Heart right ventricle (tissue), 16 donors: ENCODE measurements at regions of chr15 and their contacts with region 1.

Region 1: DNA sequence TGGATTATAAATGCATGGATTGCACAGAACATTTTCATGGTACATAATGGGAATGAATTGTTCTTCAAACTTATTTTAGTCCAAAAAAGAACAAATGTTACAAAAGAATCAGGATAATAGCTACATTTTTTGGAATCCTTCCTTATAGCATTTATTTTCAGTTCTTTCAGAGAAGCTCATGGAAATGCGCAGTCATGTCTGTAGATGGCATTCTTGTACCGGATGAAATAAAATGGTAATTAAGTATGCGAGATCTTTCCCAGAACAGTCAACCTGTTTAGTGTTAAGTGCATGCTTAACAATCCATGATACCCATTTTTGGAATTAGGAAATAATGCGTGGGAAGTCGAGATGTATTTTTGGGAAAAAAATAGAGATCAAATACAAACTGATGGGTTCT is 38.2 kb upstream of the GOLGA8B start:
- DNase-seq: no peak
- ATAC-seq: peak in 1 of 8 donors; percentile 50
- H3K4me3 ChIP-seq: no peak overlapping the region
- H3K27ac ChIP-seq: no peak overlapping the region
- H3K4me1 ChIP-seq: peaks cover 0 to 17% (median 6%) of the 10 kb centered on the region in 9 donors
- H3K27me3 ChIP-seq: peaks cover 0 to 7% (median 0%) of the 10 kb centered on the region in 7 donors
- CTCF ChIP-seq: peak; percentile 11 to 63 (median 40)

Region 2: DNA sequence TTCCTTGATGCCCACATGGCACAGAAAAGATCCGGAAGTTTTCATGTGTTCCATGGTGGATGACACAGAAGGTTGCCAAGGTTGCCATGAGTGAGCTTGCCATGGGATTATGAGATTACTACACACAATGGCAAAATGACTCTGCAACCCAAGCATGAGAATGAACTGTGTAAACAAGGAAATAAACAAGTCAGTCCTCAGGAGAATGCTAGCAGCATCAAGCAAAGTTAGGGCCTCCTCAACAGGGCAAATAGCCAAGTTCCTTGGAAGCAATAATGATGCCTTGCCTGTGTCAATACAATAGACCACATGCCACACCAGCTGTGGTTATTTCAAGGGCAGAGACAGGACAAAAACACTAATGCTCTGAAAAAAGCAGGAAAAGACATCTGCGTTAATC is 306.1 kb after region 1 on chr15:
- intact Hi-C with region 1: loop called in 3 of 10 experiments (anchors 5 kb)
- DNase-seq: no peak
- ATAC-seq: no peak
- H3K4me3 ChIP-seq: no peak overlapping the region
- H3K27ac ChIP-seq: no peak overlapping the region
- H3K4me1 ChIP-seq: peaks cover 0 to 6% (median 0%) of the 10 kb centered on the region in 9 donors
- H3K27me3 ChIP-seq: no peaks in the 10 kb centered on the region
- CTCF ChIP-seq: no peak